Heart right ventricle (tissue), 16 donors: ENCODE measurements at regions of chr3 and their contacts with region 1.

Region 1: GRCh38 chr3:133426721-133427120 is 26.9 kb downstream of the BFSP2 start:
- DNase-seq: no peak
- ATAC-seq: no peak
- H3K4me3 ChIP-seq: no peak overlapping the region
- H3K27ac ChIP-seq: no peak overlapping the region
- H3K4me1 ChIP-seq: peaks cover 0 to 5% (median 0%) of the 10 kb centered on the region in 9 donors
- H3K27me3 ChIP-seq: peaks cover 0 to 25% (median 13%) of the 10 kb centered on the region in 7 donors
- CTCF ChIP-seq: no peak

Region 2: GRCh38 chr3:133384331-133385027 is 42.2 kb before region 1 on chr3:
- intact Hi-C with region 1: loop called in 1 of 10 experiments (anchors 2 kb)
- DNase-seq: peak; percentile 55 to 60
- ATAC-seq: peak; percentile 87 to 93 (median 89)
- H3K4me3 ChIP-seq: no peak overlapping the region
- H3K27ac ChIP-seq: no peak overlapping the region
- H3K4me1 ChIP-seq: peaks cover 0 to 7% (median 0%) of the 10 kb centered on the region in 9 donors
- H3K27me3 ChIP-seq: peaks cover 0 to 9% (median 0%) of the 10 kb centered on the region in 7 donors
- CTCF ChIP-seq: peak; percentile 46 to 86 (median 78)

Region 3: GRCh38 chr3:133531981-133532380 is 105.3 kb after region 1 on chr3:
- intact Hi-C with region 1: no loop called
- DNase-seq: no peak
- ATAC-seq: no peak
- H3K4me3 ChIP-seq: no peak overlapping the region
- H3K27ac ChIP-seq: peak overlapping the region in 1 of 10 donors; percentile 52
- H3K4me1 ChIP-seq: peaks cover 0 to 33% (median 10%) of the 10 kb centered on the region in 9 donors
- H3K27me3 ChIP-seq: no peaks in the 10 kb centered on the region
- CTCF ChIP-seq: no peak